KBM-7 (cell line): ENCODE measurements at regions of chr1 and their contacts with region 1.

Region 1: GRCh38 chr1:45490626-45491486 is at the start of gene TESK2:
- DNase-seq: peak; percentile 100

Region 2: DNA sequence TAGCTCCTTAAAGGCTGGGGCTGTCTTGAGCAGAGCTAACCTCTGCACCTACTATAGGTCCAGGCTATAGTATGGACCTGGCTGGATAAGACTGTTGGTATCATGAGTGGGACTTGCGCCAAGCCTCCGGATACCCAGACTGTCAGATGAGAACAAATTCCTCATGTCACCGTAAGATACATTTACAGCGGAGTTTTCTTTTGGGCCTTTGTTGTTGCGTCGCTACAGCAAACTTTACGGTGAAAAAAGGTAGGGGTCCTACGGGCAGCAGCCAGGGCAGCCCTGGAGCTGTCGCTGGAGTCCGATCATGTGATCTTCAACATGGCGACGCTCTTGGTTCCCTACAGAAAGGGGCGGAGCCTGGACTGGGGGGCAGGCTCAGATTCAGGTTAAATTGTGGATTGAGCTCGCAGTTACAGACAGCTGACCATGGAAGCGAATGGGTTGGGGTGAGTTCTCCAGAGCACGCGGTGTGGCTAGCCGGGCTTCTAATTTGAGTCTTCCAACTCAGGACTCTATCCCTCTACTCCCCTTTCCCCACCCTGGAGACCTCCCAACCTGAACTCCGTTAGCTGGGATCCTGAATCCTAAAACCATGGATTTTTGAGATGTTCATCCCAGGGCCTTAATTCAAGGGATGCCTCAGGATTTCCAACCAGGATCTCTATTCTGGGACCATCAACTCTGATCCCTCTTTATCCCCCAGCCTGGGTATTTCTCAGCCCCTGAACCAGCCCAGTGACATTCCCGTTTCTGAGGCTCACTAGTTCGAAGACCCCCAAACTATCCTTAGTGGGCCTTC is 478.8 kb before region 1 on chr1 and contains the start of gene UROD:
- in situ Hi-C with region 1: loop called (anchors 10 kb)
- DNase-seq: peak; percentile 98

Region 3: DNA sequence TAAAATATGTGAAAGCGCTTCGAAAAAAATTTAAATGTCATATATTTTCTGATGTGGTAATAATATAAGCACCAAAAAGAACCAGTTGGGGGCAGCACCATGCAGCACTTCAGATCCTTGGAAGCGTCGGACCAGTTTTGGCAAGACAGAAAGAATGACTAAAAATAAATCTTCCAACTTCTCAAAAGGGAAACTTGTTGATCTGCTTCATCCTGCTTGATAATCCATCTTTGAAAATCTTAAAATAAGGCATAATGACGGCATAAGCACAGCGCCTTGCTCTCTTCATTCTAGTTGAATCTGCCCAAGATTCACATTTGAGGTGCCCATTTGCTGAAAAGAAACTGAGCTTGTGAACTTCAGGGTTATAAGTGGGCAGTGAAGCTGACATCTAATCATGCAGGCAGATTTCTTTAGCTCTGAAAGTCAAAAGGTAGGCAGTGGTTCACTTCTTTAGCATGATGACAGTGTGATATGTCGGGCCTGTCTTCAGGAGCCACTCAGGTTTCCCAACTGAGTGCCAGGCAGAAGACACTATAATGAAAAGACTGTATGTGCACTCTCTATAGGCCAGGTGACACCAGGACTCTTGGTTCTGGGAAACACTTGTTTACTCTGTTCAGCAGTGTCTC is 130.9 kb before region 1 on chr1:
- in situ Hi-C with region 1: loop called (anchors 10 kb)
- DNase-seq: peak; percentile 71

Region 4: DNA sequence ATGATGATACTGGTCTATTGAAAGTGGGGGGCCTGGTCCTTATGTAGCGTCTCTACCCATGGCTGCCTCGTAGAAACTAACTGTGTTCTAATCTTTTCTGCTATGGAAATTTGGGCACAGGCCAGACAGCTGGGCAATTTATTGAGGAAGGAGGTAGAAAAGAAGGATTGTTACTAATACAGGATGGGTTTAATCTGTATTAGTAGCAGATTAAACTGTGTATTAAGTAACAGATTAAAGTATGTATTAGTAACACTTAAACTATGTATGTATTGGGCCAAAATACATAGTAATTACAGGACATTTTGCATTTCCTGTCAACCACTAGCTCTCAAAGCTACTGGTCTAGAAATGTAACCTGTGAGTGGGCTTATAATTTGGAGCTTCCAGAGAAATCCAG is 454.6 kb after region 1 on chr1:
- in situ Hi-C with region 1: no loop called
- DNase-seq: no peak